B cell (primary cell): ENCODE measurements at regions of chr19 and their contacts with region 1.

Region 1: DNA sequence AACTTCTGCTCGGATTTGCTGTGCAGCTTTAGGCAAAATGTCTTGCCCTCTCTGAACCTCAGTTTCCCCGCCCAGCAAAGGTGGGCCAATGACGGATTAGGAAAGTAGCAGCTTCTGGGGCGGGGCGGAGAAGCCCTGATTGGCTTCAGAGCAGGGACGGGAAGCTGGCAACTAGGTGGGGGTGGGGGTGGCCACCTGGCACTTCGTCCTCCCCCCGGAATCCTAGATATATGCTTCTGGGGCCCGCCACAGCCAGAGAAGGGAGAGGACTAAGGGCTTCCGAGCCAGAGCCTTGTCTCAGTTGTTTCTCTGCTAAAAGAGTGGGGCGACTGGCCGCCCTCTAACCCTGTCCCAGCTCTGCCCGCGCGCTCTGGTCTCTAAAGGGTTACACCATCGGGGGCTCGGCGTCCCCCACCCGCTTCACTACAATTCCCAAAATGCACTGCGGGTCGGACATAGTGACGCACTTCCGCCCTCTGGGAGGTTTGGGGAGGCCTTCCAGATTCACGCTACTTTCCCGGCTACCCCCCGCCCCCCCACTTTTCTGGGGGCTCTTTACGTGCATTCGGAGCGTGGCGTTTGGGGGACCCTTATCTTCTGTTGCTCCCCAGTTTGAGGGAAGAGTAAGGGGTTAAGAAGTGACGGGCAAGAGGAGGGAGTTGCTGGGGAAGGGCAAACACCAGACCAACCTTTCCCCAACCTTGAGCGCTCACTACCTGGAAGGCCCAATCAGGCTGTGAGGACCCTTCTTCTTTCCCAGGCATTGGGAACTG is 672 bp upstream of the IRF2BP1 start:
- DNase-seq: peak; percentile 94
- ATAC-seq: peak; percentile 68
- H3K4me3 ChIP-seq: peak overlapping the region; percentile 68 to 86 (median 78)
- H3K4me3 Mint-ChIP-seq: peak overlapping the region; percentile 95
- H3K27ac ChIP-seq: peak overlapping the region; percentile 83 to 90
- H3K27ac Mint-ChIP-seq: peak overlapping the region; percentile 94
- H3K4me1 ChIP-seq: peaks cover 24 to 39% of the 10 kb centered on the region in 2 donors
- H3K4me1 Mint-ChIP-seq: peaks cover 28% of the 10 kb centered on the region
- H3K27me3 ChIP-seq: no peaks in the 10 kb centered on the region
- H3K27me3 Mint-ChIP-seq: no peaks in the 10 kb centered on the region
- CTCF ChIP-seq: no peak

Region 2: GRCh38 chr19:45584332-45585157 is 302.1 kb before region 1 on chr19 and contains the start of gene OPA3:
- CTCF ChIA-PET with region 1: no interaction called
- POLR2A ChIA-PET with region 1: no interaction called
- intact Hi-C with region 1: loop called (anchors 1 kb)
- DNase-seq: peak; percentile 100
- ATAC-seq: peak; percentile 87
- H3K4me3 ChIP-seq: peak within 1 kb of the TSS; percentile 62 to 98 (median 82)
- H3K4me3 Mint-ChIP-seq: peak within 1 kb of the TSS; percentile 85
- H3K27ac ChIP-seq: peak within 1 kb of the TSS; percentile 97 to 98
- H3K27ac Mint-ChIP-seq: peak within 1 kb of the TSS; percentile 99
- H3K4me1 ChIP-seq: peaks cover 10 to 15% of the 10 kb centered on the region in 2 donors
- H3K4me1 Mint-ChIP-seq: peaks cover 21% of the 10 kb centered on the region
- H3K27me3 ChIP-seq: no peaks in the 10 kb centered on the region
- H3K27me3 Mint-ChIP-seq: peaks cover 5% of the 10 kb centered on the region
- CTCF ChIP-seq: no peak
- total RNA-seq, gene OPA3: 11.2 and 11.4 TPM in 2 replicates

Region 3: GRCh38 chr19:45817010-45817724 is 69.4 kb before region 1 on chr19:
- CTCF ChIA-PET with region 1: interaction called, 4 read pairs
- POLR2A ChIA-PET with region 1: no interaction called
- intact Hi-C with region 1: loop called (anchors 1 kb)
- DNase-seq: peak; percentile 96
- ATAC-seq: peak; percentile 100
- H3K4me3 ChIP-seq: no peak overlapping the region
- H3K4me3 Mint-ChIP-seq: peak overlapping the region; percentile 54
- H3K27ac ChIP-seq: no peak overlapping the region
- H3K27ac Mint-ChIP-seq: peak overlapping the region; percentile 75
- H3K4me1 ChIP-seq: peaks cover 19 to 23% of the 10 kb centered on the region in 2 donors
- H3K4me1 Mint-ChIP-seq: peaks cover 11% of the 10 kb centered on the region
- H3K27me3 ChIP-seq: peaks cover 0 to 6% (median 2%) of the 10 kb centered on the region in 4 experiments
- H3K27me3 Mint-ChIP-seq: peaks cover 3% of the 10 kb centered on the region
- CTCF ChIP-seq: peak; percentile 97

Region 4: DNA sequence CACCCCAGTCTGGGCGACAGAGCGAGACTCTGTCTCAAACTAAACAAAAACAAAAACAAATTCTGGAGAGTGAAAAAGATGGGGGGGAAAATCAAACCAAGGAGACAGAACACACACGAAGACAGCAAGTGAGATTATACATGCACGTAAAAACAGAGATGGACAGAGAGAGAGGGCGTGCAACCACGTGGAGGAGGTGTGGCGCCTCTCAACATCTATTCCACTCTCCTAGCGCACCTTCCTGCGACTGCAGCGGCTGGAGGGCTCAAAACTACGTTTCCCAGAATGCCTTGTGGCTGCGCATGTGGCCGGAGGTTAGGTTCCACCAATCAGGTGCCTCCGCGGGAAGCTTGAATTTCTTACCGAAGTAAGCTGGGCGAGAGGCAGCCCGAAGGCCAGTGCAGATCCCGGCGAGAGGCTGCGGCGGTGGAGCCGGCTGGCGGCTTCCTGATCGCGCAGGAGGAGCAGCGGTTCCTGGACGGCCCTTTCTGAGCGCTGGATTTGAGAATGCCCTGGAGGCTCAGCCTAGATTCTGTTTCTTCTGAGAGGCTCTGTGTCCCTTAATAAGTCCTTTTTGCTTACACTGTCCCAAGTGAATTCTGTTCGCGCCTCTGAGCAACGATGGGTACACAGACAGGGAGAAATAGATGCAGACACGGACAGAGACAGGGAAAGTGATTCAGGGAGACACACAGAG is 41.1 kb after region 1 on chr19:
- CTCF ChIA-PET with region 1: interaction called, 3 read pairs
- POLR2A ChIA-PET with region 1: no interaction called
- intact Hi-C with region 1: loop called (anchors 1 kb)
- DNase-seq: peak; percentile 93
- ATAC-seq: peak; percentile 99
- H3K4me3 ChIP-seq: no peak overlapping the region
- H3K4me3 Mint-ChIP-seq: peak overlapping the region; percentile 32
- H3K27ac ChIP-seq: no peak overlapping the region
- H3K27ac Mint-ChIP-seq: no peak overlapping the region
- H3K4me1 ChIP-seq: peaks cover 7 to 8% of the 10 kb centered on the region in 2 donors
- H3K4me1 Mint-ChIP-seq: peaks cover 8% of the 10 kb centered on the region
- H3K27me3 ChIP-seq: peaks cover 0 to 8% (median 1%) of the 10 kb centered on the region in 4 experiments
- H3K27me3 Mint-ChIP-seq: peaks cover 11% of the 10 kb centered on the region
- CTCF ChIP-seq: no peak